Activated CD4-positive, alpha-beta memory T cell treated with anti-CD3 and anti-CD28 coated beads for 36 hours (primary cell): ENCODE measurements at regions of chr12 and their contacts with region 1.

Region 1: GRCh38 chr12:8949342-8950220 is at the start of gene M6PR:
- DNase-seq: peak; percentile 96
- H3K4me3 Mint-ChIP-seq: peak within 1 kb of the TSS; percentile 99
- H3K27ac Mint-ChIP-seq: peak within 1 kb of the TSS; percentile 94
- H3K4me1 Mint-ChIP-seq: peaks cover 56% of the 10 kb centered on the region
- H3K27me3 Mint-ChIP-seq: no peaks in the 10 kb centered on the region
- total RNA-seq, gene M6PR: 150 to 164 TPM

Region 2: GRCh38 chr12:8681041-8681902 is 268.3 kb before region 1 on chr12:
- CTCF ChIA-PET with region 1: interaction called, 3 read pairs
- POLR2A ChIA-PET with region 1: no interaction called
- intact Hi-C with region 1: loop called (anchors 5 kb)
- DNase-seq: no peak
- H3K4me3 Mint-ChIP-seq: no peak overlapping the region
- H3K27ac Mint-ChIP-seq: no peak overlapping the region
- H3K4me1 Mint-ChIP-seq: peaks cover 2% of the 10 kb centered on the region
- H3K27me3 Mint-ChIP-seq: peaks cover 5% of the 10 kb centered on the region

Region 3: GRCh38 chr12:8914716-8915526 is 34.7 kb before region 1 on chr12:
- CTCF ChIA-PET with region 1: interaction called, 16 read pairs
- POLR2A ChIA-PET with region 1: interaction called, 8 read pairs
- intact Hi-C with region 1: loop called (anchors 1 kb)
- DNase-seq: peak; percentile 74
- H3K4me3 Mint-ChIP-seq: no peak overlapping the region
- H3K27ac Mint-ChIP-seq: no peak overlapping the region
- H3K4me1 Mint-ChIP-seq: peaks cover 7% of the 10 kb centered on the region
- H3K27me3 Mint-ChIP-seq: no peaks in the 10 kb centered on the region

Region 4: GRCh38 chr12:8969861-8970412 is 20.4 kb after region 1 on chr12:
- CTCF ChIA-PET with region 1: no interaction called
- POLR2A ChIA-PET with region 1: no interaction called
- intact Hi-C with region 1: no loop called
- DNase-seq: no peak
- H3K4me3 Mint-ChIP-seq: no peak overlapping the region
- H3K27ac Mint-ChIP-seq: no peak overlapping the region
- H3K4me1 Mint-ChIP-seq: peaks cover 11% of the 10 kb centered on the region
- H3K27me3 Mint-ChIP-seq: no peaks in the 10 kb centered on the region

Region 5: GRCh38 chr12:8996682-8997360 is 47.2 kb after region 1 on chr12:
- CTCF ChIA-PET with region 1: interaction called, 40 read pairs
- POLR2A ChIA-PET with region 1: interaction called, 9 read pairs
- intact Hi-C with region 1: loop called (anchors 1 kb)
- DNase-seq: peak; percentile 58
- H3K4me3 Mint-ChIP-seq: no peak overlapping the region
- H3K27ac Mint-ChIP-seq: no peak overlapping the region
- H3K4me1 Mint-ChIP-seq: peaks cover 70% of the 10 kb centered on the region
- H3K27me3 Mint-ChIP-seq: no peaks in the 10 kb centered on the region

Region 6: DNA sequence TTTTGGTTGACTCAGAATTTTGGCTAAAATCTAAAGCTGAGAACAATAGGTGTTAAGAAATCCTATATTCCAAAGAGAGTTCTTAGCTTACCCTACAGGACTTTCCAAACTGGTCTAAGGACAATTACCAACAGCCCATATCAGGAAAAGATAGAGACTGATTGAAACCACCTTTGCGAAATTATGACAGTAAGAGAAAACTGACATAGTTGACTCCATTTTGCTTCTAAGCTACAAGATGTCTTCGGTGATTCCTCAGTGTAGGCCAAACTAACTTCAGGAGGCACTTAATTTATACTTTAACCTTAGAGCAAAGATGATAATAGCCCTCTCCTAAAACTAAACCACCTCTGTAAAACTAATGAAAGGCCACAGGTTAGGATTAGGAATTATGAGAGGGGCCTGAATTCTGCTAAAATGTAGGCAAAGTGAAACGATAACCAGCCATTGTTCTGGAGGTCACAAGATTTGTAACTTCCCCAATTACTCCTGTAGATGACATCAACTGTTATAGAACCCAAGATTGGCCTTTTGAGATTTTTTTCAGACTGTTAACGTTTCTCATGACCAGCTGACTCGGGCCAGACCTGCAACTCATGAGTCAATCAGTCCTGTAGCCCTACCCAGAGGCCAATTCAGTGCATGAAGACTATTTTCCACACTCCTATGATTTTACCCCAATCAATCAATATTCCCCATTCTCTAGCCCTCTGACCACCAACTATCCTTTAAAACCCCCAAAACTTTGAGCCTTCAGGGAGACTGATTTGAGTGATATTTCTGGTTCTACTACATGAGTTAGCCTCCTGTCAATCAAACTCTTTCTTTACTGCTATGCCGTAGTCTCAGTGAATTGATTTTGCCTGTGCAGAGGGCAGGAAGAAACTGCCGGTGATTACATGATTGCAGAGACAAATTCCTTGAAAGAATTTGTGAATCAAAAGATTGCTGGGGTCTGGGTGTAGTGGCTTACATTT is 82.9 kb after region 1 on chr12:
- CTCF ChIA-PET with region 1: interaction called, 135 read pairs
- POLR2A ChIA-PET with region 1: interaction called, 5 read pairs
- intact Hi-C with region 1: no loop called
- DNase-seq: peak; percentile 27
- H3K4me3 Mint-ChIP-seq: no peak overlapping the region
- H3K27ac Mint-ChIP-seq: peak overlapping the region; percentile 31
- H3K4me1 Mint-ChIP-seq: peaks cover 53% of the 10 kb centered on the region
- H3K27me3 Mint-ChIP-seq: peaks cover 2% of the 10 kb centered on the region

Region 7: GRCh38 chr12:9276990-9277389 is 327.4 kb after region 1 on chr12:
- CTCF ChIA-PET with region 1: no interaction called
- POLR2A ChIA-PET with region 1: no interaction called
- intact Hi-C with region 1: loop called (anchors 5 kb)
- DNase-seq: no peak
- H3K4me3 Mint-ChIP-seq: no peak overlapping the region
- H3K27ac Mint-ChIP-seq: no peak overlapping the region
- H3K4me1 Mint-ChIP-seq: peaks cover under 1% of the 10 kb centered on the region
- H3K27me3 Mint-ChIP-seq: peaks cover 8% of the 10 kb centered on the region